ENCODE measurements at regions of chr19 and their contacts with region 1.

Region 1: GRCh38 chr19:20287070-20287469 is 120.1 kb downstream of the ZNF486 start:
- DNase-seq: peak in 35 of 42 donors; percentile 16 to 82 (median 50)

Region 2: DNA sequence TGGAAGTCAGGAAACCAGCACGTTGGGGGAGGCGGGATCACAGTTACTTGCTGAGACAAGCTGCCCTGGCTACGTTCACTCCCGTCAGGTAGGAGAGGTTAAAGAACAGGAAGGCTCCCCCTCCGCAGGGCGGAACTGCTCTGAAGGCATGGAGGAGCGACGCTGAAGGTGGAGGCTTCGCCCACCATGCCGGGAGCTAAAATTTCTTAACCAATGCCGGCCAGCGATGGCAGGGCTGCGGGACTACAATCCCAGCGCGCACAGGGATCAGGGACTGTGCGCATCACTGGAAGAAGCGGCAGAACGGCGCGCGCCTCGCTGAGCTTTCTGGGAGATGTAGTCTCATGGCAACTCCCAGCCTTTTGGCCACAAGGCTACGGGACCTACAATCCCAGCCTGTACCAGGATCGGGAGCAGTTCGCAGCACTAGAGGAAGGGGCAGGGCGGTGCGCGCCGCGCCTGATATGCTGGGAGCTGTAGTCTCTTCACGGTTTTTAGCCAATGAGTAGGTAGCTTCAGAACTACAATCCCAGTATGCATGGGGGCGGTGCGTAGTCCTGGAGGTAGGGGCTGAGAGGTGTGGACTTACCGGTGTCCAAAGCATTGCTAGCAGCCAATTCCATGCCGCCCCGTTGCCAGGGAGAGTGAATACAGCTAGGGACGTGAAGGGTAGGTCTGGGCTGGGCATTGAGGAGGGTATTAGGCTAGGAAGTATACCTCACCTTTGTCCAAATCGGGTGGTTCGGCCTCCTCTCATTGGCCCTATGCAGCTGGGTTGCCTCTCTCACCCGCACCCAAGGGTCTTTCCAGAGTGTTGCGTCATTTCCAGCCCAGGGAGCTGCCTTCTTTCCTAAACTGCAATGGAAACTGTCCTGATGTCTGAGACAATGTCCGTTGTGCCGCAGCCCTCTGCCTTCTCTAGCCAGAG is 235.0 kb before region 1 on chr19:
- intact Hi-C with region 1: loop called (anchors 10 kb)
- DNase-seq: peak; percentile 90 to 100 (median 99)

Region 3: GRCh38 chr19:20333508-20333907 is 46.4 kb after region 1 on chr19:
- intact Hi-C with region 1: no loop called
- DNase-seq: no peak